ENCODE measurements at regions of chr9 and their contacts with region 1.

Region 1: DNA sequence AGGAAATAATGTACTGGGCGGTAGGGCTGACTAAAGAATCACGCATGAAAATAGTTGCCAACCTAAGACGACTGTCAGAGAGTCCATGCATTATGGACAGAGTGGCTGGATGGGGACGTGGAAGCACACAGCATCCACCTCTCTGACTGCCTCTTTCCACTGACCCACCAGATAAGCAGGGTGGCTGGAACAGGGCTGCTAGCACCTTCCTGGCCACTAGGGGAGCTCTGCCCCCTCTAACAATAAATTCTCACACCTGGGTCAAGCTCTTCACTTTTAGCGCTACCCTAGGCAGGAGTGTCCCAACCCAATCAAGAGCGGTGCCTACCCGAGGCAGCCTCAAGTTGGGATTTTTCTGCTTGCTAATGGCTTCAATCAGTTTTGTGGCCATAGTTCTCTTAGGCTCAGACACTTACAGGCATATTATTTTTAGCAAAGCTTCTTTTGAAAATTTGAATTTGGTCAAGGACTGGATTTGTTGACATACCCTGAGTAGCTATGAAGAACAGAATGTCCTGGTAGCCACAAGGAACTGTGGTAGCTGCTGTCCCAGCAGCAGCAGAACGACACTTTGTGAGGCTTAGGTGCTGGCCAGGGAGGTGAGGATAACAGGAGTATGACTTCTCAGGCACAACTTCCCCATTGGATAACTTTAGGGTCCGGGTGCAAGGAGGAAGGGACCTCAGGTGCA is 6.9 kb upstream of the TPM2 start:
- DNase-seq: peak; percentile 75
- ATAC-seq: peak; percentile 98
- H3K4me3 Mint-ChIP-seq: no peak overlapping the region
- H3K27ac Mint-ChIP-seq: no peak overlapping the region
- H3K4me1 Mint-ChIP-seq: no peaks in the 10 kb centered on the region
- H3K27me3 Mint-ChIP-seq: no peaks in the 10 kb centered on the region
- CTCF ChIP-seq: peak; percentile 95

Region 2: GRCh38 chr9:35211854-35212253 is 484.8 kb before region 1 on chr9:
- CTCF ChIA-PET with region 1: no interaction called
- POLR2A ChIA-PET with region 1: no interaction called
- intact Hi-C with region 1: no loop called
- DNase-seq: no peak
- ATAC-seq: no peak
- H3K4me3 Mint-ChIP-seq: no peak overlapping the region
- H3K27ac Mint-ChIP-seq: no peak overlapping the region
- H3K4me1 Mint-ChIP-seq: no peaks in the 10 kb centered on the region
- H3K27me3 Mint-ChIP-seq: peaks cover 2% of the 10 kb centered on the region
- CTCF ChIP-seq: no peak

Region 3: DNA sequence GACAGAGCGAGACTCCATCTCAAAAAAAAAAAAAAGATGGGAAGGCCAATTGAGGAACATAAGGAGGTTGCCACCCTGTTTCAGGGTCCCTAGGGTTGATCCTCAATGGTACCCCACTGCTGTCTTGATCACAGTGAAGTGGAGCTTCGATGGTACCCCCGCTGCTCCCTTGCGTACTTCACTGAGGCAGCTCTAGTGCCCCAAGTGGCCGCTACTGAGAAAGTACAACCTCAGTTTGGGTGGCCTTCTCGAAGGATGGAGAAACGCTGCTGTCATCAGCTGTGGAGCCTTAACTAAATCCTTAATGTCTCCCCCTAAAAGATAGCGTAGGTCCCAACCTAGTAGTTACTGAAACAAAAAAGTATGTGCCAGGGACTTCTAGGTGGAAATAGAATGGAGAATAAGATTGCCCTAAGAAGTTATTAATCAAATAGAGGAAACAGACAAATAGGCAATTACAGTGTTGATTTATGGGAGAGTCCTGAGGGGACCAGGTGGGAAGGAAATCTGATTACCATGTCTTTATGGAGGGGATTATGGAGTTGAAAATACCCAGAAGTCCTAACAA is 85.4 kb before region 1 on chr9:
- CTCF ChIA-PET with region 1: interaction called, 44 read pairs
- POLR2A ChIA-PET with region 1: interaction called, 3 read pairs
- intact Hi-C with region 1: no loop called
- DNase-seq: peak; percentile 77
- ATAC-seq: peak; percentile 94
- H3K4me3 Mint-ChIP-seq: no peak overlapping the region
- H3K27ac Mint-ChIP-seq: no peak overlapping the region
- H3K4me1 Mint-ChIP-seq: peaks cover 16% of the 10 kb centered on the region
- H3K27me3 Mint-ChIP-seq: no peaks in the 10 kb centered on the region
- CTCF ChIP-seq: peak; percentile 79

Region 4: GRCh38 chr9:35646533-35647265 is 50.0 kb before region 1 on chr9:
- CTCF ChIA-PET with region 1: interaction called, 46 read pairs
- POLR2A ChIA-PET with region 1: no interaction called
- intact Hi-C with region 1: no loop called
- DNase-seq: peak; percentile 94
- ATAC-seq: peak; percentile 84
- H3K4me3 Mint-ChIP-seq: peak overlapping the region; percentile 85
- H3K27ac Mint-ChIP-seq: peak overlapping the region; percentile 79
- H3K4me1 Mint-ChIP-seq: peaks cover 44% of the 10 kb centered on the region
- H3K27me3 Mint-ChIP-seq: no peaks in the 10 kb centered on the region
- CTCF ChIP-seq: peak; percentile 83

Region 5: DNA sequence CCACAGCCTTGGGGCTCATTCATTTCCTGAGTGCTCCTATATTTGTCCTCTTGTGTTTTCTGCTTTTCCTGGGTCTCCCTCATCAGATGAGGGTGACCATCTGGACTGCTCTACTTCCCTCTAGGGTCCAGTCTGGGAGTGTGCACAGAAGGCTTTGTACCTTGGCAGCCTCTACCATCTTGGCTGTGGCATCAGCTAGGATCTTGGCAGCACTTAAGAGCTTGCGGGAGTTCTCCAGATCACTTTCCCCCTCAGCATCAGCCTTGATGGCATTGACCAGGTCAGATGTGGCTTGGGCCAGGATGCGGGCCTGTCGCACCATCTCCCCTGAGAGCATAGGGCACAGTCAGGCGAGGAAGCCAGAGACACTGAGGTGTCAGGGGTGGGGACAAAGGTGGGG is 19.6 kb after region 1 on chr9:
- CTCF ChIA-PET with region 1: interaction called, 170 read pairs
- POLR2A ChIA-PET with region 1: interaction called, 6 read pairs
- intact Hi-C with region 1: no loop called
- DNase-seq: no peak
- ATAC-seq: no peak
- H3K4me3 Mint-ChIP-seq: no peak overlapping the region
- H3K27ac Mint-ChIP-seq: peak overlapping the region; percentile 58
- H3K4me1 Mint-ChIP-seq: peaks cover 4% of the 10 kb centered on the region
- H3K27me3 Mint-ChIP-seq: no peaks in the 10 kb centered on the region
- CTCF ChIP-seq: no peak

Region 6: GRCh38 chr9:35798658-35799374 is 102.1 kb after region 1 on chr9:
- CTCF ChIA-PET with region 1: no interaction called
- POLR2A ChIA-PET with region 1: no interaction called
- intact Hi-C with region 1: no loop called
- DNase-seq: peak; percentile 59
- ATAC-seq: peak; percentile 92
- H3K4me3 Mint-ChIP-seq: no peak overlapping the region
- H3K27ac Mint-ChIP-seq: no peak overlapping the region
- H3K4me1 Mint-ChIP-seq: peaks cover 20% of the 10 kb centered on the region
- H3K27me3 Mint-ChIP-seq: no peaks in the 10 kb centered on the region
- CTCF ChIP-seq: no peak

Region 7: GRCh38 chr9:35954942-35955546 is 258.4 kb after region 1 on chr9:
- CTCF ChIA-PET with region 1: no interaction called
- POLR2A ChIA-PET with region 1: no interaction called
- intact Hi-C with region 1: no loop called
- DNase-seq: peak; percentile 67
- ATAC-seq: peak; percentile 80
- H3K4me3 Mint-ChIP-seq: no peak overlapping the region
- H3K27ac Mint-ChIP-seq: no peak overlapping the region
- H3K4me1 Mint-ChIP-seq: no peaks in the 10 kb centered on the region
- H3K27me3 Mint-ChIP-seq: peaks cover 4% of the 10 kb centered on the region
- CTCF ChIP-seq: peak; percentile 79

Measured in activated CD8-positive, alpha-beta T cell treated with anti-CD3 and anti-CD28 coated beads for 36 hours (primary cell).